ENCODE measurements at regions of chr21 and their contacts with region 1.

Region 1: DNA sequence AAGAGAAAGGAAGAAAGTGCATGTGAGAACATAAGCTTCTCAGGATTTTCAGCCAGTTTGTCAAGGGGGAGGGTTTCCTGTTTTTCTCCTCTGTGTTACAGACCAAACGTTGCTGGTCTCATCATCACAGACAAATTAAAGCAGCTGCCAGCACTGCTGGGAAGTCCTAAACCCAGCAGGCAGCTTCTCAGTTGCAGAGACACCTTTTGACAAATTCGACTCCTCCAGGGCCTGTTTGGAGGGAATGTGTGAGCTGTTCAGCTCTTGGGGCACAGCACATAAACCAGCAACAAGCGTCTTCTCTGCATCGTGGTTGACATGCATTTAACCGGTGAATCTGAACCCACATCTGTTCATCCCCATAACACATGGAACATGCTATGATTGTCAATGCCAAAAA is 454.6 kb upstream of the RUNX1 start:
- DNase-seq: peak in 6 of 10 donors; percentile 16 to 62 (median 38)
- ATAC-seq: peak; percentile 88 to 99
- H3K4me3 Mint-ChIP-seq: peak overlapping the region; percentile 37 to 84 (median 73)
- H3K27ac Mint-ChIP-seq: peak overlapping the region; percentile 72 to 99 (median 92)
- H3K4me1 Mint-ChIP-seq: peaks cover 9 to 57% (median 47%) of the 10 kb centered on the region in 4 donors
- H3K27me3 Mint-ChIP-seq: no peaks in the 10 kb centered on the region

Region 2: GRCh38 chr21:35528116-35529042 is 24.7 kb after region 1 on chr21:
- POLR2A ChIA-PET with region 1: interaction called, 15 read pairs
- DNase-seq: peak in 9 of 10 donors; percentile 11 to 65 (median 35)
- ATAC-seq: peak; percentile 74 to 83
- H3K4me3 Mint-ChIP-seq: peak overlapping the region; percentile 81 to 92 (median 88)
- H3K27ac Mint-ChIP-seq: peak overlapping the region; percentile 90 to 98 (median 96)
- H3K4me1 Mint-ChIP-seq: peaks cover 23 to 57% (median 47%) of the 10 kb centered on the region in 4 donors
- H3K27me3 Mint-ChIP-seq: no peaks in the 10 kb centered on the region

Measured in naive thymus-derived CD8-positive, alpha-beta T cell (primary cell).